IMR-90 (cell line): ENCODE measurements at regions of chr1 and their contacts with region 1.

Region 1: DNA sequence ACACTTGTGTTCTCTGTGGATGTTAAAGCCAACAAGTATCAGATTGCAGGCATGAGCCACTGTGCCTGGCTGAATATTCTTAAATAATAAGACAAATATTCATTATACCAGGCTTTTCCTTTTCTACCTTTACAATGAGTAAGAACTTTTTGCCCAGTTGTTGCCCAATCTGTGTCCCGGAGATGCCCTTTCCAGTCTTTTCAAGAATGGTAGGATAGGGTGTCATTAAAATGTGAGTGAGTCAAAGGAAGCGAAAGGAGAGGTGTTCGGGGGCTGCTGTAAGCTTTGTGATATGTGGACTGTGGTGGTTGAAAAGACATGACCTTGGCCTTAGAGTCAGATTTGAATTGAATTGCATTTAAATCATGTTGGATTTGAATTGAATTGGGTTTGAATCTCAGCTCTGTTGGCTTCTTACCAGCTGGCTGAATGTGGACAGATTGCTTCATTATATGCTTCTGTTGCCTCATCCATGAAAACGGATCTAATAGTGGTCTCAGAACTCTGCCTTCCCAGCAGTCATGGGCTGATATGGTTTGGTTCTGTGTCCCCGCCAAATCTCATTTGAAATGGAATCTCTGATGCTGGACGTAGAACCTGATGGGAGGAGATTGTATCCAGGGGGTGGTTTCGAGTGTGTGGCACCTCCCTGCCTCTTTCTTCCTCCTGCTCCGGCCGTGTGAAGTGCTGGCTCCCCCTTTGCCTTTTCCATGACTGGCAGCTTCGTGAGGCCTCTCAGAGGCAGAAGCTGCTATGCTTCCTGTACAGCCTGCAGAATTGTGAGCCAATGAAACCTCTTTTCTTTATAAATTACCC is 22.7 kb upstream of the AADACL3 start:
- DNase-seq: no peak
- ATAC-seq: no peak
- H3K4me3 ChIP-seq: no peak overlapping the region
- H3K27ac ChIP-seq: no peak overlapping the region
- H3K4me1 ChIP-seq: no peaks in the 10 kb centered on the region
- H3K27me3 ChIP-seq: no peaks in the 10 kb centered on the region
- CTCF ChIP-seq: no peak
- POLR2A ChIP-seq: no peak
- RAD21 ChIP-seq: no peak

Region 2: GRCh38 chr1:12132092-12132491 is 561.1 kb before region 1 on chr1:
- CTCF ChIA-PET with region 1: interaction called, 10 read pairs
- POLR2A ChIA-PET with region 1: no interaction called
- dilution Hi-C with region 1: no loop called
- in situ Hi-C with region 1: no loop called
- intact Hi-C with region 1: no loop called
- DNase-seq: peak; percentile 57
- ATAC-seq: no peak
- H3K4me3 ChIP-seq: no peak overlapping the region
- H3K27ac ChIP-seq: no peak overlapping the region
- H3K4me1 ChIP-seq: peaks cover 7% of the 10 kb centered on the region; the same call in 1 of the 2 replicates
- H3K27me3 ChIP-seq: no peaks in the 10 kb centered on the region
- CTCF ChIP-seq: no peak
- POLR2A ChIP-seq: no peak
- RAD21 ChIP-seq: no peak